Activated naive CD4-positive, alpha-beta T cell treated with anti-CD3 and anti-CD28 coated beads for 36 hours (primary cell): ENCODE measurements at regions of chr6 and their contacts with region 1.

Region 1: DNA sequence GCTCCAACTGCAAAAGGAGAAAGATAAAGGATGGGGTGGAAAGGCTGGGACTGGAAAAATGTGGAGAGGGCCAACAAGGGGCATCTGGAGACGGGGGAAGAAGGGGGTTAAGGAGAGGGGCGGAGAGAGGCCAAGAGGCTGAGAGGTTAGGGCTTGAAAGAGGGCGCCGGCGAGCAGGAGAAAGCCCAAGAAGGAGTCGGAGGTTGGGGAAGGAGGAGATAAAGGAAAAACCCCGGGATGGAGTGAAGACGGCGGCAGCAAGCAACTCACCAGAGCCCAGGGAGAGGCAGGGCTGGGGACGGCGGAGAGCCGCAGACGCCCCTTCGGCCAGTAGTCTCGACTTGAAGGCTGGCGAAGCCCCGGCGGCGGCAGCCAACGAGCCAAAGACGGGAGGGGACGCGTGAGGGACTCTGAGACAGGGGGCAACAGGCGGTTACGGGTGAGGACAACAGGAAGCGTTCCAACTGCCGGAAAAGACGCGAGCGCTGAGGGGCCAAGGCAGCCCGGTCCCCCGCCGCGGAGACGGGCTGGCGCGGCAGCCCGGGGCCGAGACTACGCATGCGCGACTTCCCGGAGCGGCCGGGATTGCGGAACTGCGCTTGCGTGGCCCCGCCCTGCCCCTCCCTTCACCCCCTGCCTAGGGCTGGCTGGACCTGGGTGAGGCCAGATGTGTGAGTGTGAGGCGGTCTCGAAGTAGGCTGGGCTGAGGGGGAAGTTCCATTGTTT is at the start of gene STK38:
- DNase-seq: peak; percentile 95
- H3K4me3 Mint-ChIP-seq: peak within 1 kb of the TSS; percentile 97
- H3K27ac Mint-ChIP-seq: peak within 1 kb of the TSS; percentile 97
- H3K4me1 Mint-ChIP-seq: peaks cover 39% of the 10 kb centered on the region
- H3K27me3 Mint-ChIP-seq: no peaks in the 10 kb centered on the region
- total RNA-seq, gene STK38: 23.6 to 24.4 TPM

Region 2: DNA sequence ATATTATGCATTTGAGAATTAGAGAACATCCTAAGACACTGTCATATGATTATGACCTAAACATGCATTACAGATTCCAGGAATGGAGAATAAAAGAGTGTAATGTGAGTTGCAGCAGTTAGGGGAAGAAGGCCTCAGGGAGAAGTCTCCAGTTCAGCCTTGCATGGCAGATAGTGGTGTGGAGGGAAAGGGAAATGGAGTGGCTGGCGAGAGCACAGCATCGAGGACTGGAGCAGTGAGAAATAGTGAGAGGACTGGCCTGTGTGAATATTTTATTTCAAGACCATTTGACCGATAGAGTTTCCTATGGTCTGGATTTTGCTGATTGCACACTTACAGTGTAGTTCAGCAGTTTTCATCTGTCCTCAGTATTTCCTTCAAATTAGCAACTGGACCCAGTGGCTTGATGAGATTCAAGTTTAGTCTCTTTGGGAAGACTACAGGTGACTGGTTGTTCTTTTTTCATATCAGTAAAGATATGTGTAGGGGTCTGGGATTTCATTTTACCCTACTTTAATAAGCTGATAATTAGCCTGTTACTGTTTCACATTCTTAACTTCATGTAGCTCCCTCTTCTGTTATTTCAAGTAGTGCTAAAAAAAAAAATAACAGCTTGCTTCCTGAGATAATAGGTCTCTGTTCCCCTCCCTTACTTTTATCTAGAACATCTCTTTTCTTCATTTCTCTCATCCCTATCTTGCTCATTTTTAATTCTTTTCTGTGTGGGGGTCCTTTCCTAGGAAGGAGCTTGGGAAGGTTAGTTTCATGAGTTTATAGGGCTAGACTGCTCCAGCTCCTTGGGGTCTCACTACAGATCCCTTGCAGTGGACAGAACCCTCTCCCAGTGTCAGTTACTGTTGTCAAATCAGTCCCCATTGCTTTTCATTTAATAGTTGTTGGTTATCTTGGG is 1727.3 kb before region 1 on chr6:
- CTCF ChIA-PET with region 1: no interaction called
- intact Hi-C with region 1: no loop called
- DNase-seq: no peak
- H3K4me3 Mint-ChIP-seq: no peak overlapping the region
- H3K27ac Mint-ChIP-seq: no peak overlapping the region
- H3K4me1 Mint-ChIP-seq: peaks cover 8% of the 10 kb centered on the region
- H3K27me3 Mint-ChIP-seq: no peaks in the 10 kb centered on the region

Region 3: GRCh38 chr6:36423101-36423824 is 123.8 kb before region 1 on chr6:
- CTCF ChIA-PET with region 1: no interaction called
- intact Hi-C with region 1: loop called (anchors 1 kb)
- DNase-seq: peak; percentile 99
- H3K4me3 Mint-ChIP-seq: peak overlapping the region; percentile 89
- H3K27ac Mint-ChIP-seq: peak overlapping the region; percentile 95
- H3K4me1 Mint-ChIP-seq: peaks cover 15% of the 10 kb centered on the region
- H3K27me3 Mint-ChIP-seq: no peaks in the 10 kb centered on the region

Region 4: GRCh38 chr6:36506611-36507010 is 40.5 kb before region 1 on chr6:
- CTCF ChIA-PET with region 1: no interaction called
- intact Hi-C with region 1: loop called (anchors 2 kb)
- DNase-seq: no peak
- H3K4me3 Mint-ChIP-seq: no peak overlapping the region
- H3K27ac Mint-ChIP-seq: peak overlapping the region; percentile 34
- H3K4me1 Mint-ChIP-seq: peaks cover 30% of the 10 kb centered on the region
- H3K27me3 Mint-ChIP-seq: no peaks in the 10 kb centered on the region

Region 5: DNA sequence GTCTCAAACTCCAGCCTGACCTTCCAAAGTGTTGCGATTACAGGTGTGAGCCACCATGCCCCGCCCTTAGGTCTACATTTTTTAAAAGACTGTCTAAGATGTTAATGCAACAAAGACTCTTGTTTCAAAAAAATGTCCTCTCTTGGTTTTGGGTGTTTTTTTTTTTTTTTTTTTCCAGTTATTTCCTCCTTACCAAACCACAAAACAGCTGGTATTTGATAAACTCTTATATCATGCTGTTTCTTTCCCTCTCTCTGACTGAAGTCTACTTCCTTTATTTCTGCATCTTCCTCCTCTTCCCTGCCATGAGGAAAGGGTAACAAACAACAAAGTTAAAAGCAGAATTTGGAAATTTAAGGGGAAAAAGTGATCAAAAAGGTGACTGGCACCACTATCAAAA is 21.0 kb before region 1 on chr6:
- CTCF ChIA-PET with region 1: interaction called, 3 read pairs
- intact Hi-C with region 1: loop called (anchors 2 kb)
- DNase-seq: no peak
- H3K4me3 Mint-ChIP-seq: no peak overlapping the region
- H3K27ac Mint-ChIP-seq: peak overlapping the region; percentile 8
- H3K4me1 Mint-ChIP-seq: peaks cover 35% of the 10 kb centered on the region
- H3K27me3 Mint-ChIP-seq: no peaks in the 10 kb centered on the region